ENCODE measurements at regions of chr16 and their contacts with region 1.

Region 1: GRCh38 chr16:22077700-22078313 is 14.5 kb upstream of the VWA3A start:
- DNase-seq: peak; percentile 30 to 81
- ATAC-seq: peak; percentile 67

Region 2: DNA sequence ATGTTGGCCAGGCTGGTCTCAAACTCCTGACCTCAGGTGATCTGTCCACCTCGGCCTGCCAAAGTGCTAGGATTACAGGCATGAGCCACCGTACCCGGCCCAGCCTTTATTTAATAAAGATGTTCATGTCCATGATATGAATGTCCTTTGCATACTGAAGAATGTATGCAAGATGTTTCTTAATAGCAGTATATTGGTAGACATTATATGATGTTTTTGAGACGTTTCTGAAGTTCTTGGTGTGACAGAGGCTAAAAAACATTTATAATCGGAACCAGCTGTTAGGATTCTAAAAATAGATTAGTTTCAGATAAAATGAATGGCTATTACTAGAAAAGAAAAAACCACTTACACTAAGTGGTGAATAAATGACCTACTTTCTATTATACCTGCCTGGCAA is 88.7 kb before region 1 on chr16:
- intact Hi-C with region 1: no loop called
- DNase-seq: no peak
- ATAC-seq: no peak

Region 3: GRCh38 chr16:22001591-22001990 is 76.2 kb before region 1 on chr16:
- intact Hi-C with region 1: loop called (anchors 2 to 10 kb)
- DNase-seq: no peak
- ATAC-seq: no peak

Region 4: DNA sequence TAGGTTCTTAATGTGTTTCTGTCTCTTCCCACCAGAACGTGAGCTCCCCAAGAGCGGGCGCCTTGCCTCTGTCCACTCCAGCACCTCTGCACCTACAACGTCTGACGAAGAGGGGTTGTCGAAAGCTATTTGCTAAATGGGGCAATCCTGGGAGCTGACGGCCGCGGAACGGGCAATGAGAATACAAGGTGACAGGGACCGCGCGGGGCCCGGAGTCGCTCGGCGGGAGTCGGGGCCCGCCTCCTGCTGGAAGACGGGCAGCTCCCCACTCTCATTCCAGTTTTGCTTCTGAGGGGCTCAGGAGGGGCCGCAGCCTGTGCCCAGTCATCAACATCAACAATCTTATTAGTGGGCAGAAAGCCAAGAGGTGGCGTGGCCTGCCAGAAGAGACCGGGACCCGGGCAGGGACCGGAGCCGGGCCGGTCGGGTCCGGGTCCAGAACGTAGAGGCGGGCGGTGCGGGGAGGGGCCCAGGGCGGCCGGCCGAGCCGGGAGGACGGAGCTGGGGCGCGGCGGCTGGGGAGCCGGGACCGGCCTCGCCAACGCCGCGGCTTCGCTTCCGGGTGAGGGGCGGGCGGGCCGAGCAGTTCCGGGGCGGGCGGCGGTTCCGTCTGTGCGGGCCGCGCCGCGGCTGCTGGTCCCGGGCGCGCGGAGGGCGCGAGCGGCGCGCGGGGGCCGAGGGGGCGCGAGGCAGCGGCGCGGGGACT is 70.1 kb before region 1 on chr16 and contains the start of gene MOSMO:
- intact Hi-C with region 1: loop called in 1 of 2 experiments (anchors 10 kb)
- DNase-seq: peak; percentile 53 to 81
- ATAC-seq: peak; percentile 93
- total RNA-seq, gene MOSMO: 9.0 to 9.6 TPM

Region 5: GRCh38 chr16:22188595-22189442 is 111.0 kb after region 1 on chr16:
- intact Hi-C with region 1: loop called (anchors 5 to 10 kb)
- DNase-seq: peak; percentile 67 to 85
- ATAC-seq: peak; percentile 31

Measured in left colon (tissue), 2 donors.